Caco-2 (cell line): ENCODE measurements at regions of chr10 and their contacts with region 1.

Region 1: DNA sequence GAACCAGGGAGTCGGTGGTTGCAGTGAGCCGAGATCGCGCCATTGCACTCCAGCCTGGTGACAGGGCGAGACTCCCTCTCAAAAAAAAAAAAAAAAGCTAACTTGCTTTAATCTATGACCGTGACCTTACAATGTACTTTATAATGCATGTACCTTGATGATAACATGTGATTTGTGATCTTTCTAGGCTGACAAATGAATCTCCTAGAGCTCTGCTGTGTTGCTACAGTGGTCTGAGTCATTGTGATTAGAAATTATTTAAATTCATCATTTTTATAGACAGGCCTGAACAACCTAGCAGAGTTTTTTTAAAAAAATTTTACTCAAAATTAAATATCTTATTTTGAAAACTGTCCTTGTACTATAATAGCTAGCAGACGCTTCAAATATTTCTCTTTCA is 722.8 kb downstream of the NRG3 start:
- DNase-seq: no peak
- H3K4me3 ChIP-seq: no peak overlapping the region
- H3K4me3 Mint-ChIP-seq: peak overlapping the region; percentile 38
- H3K27ac Mint-ChIP-seq: peak overlapping the region; percentile 61
- H3K4me1 ChIP-seq: peaks cover 32% of the 10 kb centered on the region
- H3K4me1 Mint-ChIP-seq: peaks cover 13% of the 10 kb centered on the region
- H3K27me3 ChIP-seq: no peaks in the 10 kb centered on the region
- H3K27me3 Mint-ChIP-seq: no peaks in the 10 kb centered on the region
- CTCF ChIP-seq: no peak

Region 2: GRCh38 chr10:82680608-82681007 is 82.8 kb after region 1 on chr10:
- CTCF ChIA-PET with region 1: no interaction called
- POLR2A ChIA-PET with region 1: no interaction called
- intact Hi-C with region 1: loop called (anchors 5 kb)
- DNase-seq: no peak
- H3K4me3 ChIP-seq: no peak overlapping the region
- H3K4me3 Mint-ChIP-seq: no peak overlapping the region
- H3K27ac Mint-ChIP-seq: no peak overlapping the region
- H3K4me1 ChIP-seq: 0 out of 2 replicates have a peak, but pooled peaks cover 4% of the 10 kb centered on the region
- H3K4me1 Mint-ChIP-seq: peaks cover 13% of the 10 kb centered on the region
- H3K27me3 ChIP-seq: no peaks in the 10 kb centered on the region
- H3K27me3 Mint-ChIP-seq: no peaks in the 10 kb centered on the region
- CTCF ChIP-seq: no peak